ENCODE measurements at regions of chr6 and their contacts with region 1.

Region 1: GRCh38 chr6:797479-798077 is 104.6 kb upstream of the EXOC2 start:
- DNase-seq: peak in 7 of 14 experiments; percentile 1 to 59 (median 40)
- ATAC-seq: no peak
- H3K4me3 ChIP-seq: no peak overlapping the region
- H3K4me3 Mint-ChIP-seq: no peak overlapping the region
- H3K27ac ChIP-seq: no peak overlapping the region
- H3K27ac Mint-ChIP-seq: no peak overlapping the region
- H3K4me1 ChIP-seq: no peaks in the 10 kb centered on the region
- H3K4me1 Mint-ChIP-seq: no peaks in the 10 kb centered on the region
- H3K27me3 ChIP-seq: peaks cover 3 to 14% of the 10 kb centered on the region in 2 experiments
- H3K27me3 Mint-ChIP-seq: peaks cover 73% of the 10 kb centered on the region
- CTCF ChIP-seq: peak; percentile 63

Region 2: GRCh38 chr6:1381481-1382330 is 584.1 kb after region 1 on chr6:
- CTCF ChIA-PET with region 1: no interaction called
- POLR2A ChIA-PET with region 1: no interaction called
- intact Hi-C with region 1: loop called in 1 of 2 experiments (anchors 5 kb)
- DNase-seq: peak in 13 of 14 experiments; percentile 19 to 70 (median 48)
- ATAC-seq: peak; percentile 67
- H3K4me3 ChIP-seq: no peak overlapping the region
- H3K4me3 Mint-ChIP-seq: no peak overlapping the region
- H3K27ac ChIP-seq: no peak overlapping the region
- H3K27ac Mint-ChIP-seq: no peak overlapping the region
- H3K4me1 ChIP-seq: peaks cover 37% of the 10 kb centered on the region
- H3K4me1 Mint-ChIP-seq: peaks cover 43% of the 10 kb centered on the region
- H3K27me3 ChIP-seq: peaks cover 75 to 96% of the 10 kb centered on the region in 2 experiments
- H3K27me3 Mint-ChIP-seq: peaks cover 72% of the 10 kb centered on the region
- CTCF ChIP-seq: peak; percentile 47

Region 3: DNA sequence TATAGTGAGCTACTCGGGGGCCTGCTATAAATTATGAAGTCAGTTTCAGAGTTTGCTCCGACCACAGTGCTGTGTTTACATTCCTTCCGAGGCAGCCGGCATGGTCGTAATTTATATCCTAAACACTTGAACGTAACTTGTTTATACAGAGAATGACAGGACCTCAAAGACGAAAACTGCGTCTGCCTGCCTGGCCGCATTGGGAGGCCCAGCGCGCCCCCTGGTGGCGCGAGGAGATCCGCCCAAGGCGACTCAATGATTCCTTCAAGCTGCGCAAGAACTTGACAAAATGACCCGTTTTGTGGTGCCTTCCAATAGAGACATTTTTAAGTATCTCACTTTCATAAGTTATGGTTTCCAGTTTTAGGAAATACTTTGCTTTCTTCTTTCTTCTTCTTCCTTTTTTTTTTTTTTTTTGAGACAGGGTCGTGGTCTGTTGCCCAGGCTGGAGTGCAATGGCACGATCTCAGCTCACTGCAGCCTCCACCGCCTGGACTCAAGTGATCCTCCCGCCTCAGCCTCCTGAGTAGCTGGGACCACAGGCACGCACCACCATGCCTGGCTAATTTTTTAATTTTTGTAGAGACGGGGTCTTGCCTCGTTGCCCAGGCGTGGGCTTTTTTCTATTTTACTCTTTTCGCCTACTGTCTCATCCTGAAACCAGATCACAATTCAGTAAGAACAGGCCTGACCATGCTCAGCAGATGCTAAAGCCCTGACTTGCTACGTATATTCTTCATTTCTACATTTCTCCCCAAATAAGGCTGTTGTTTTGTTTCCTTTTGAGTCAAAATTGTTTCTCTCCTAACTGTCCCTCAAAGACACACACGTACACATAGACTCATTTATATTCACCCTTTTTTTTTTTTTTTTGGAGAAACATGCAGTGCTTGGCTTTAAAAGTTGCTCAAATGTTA is 599.6 kb after region 1 on chr6:
- CTCF ChIA-PET with region 1: no interaction called
- POLR2A ChIA-PET with region 1: no interaction called
- intact Hi-C with region 1: loop called (anchors 1 to 5 kb)
- DNase-seq: peak; percentile 47 to 81 (median 63)
- ATAC-seq: peak; percentile 63
- H3K4me3 ChIP-seq: no peak overlapping the region
- H3K4me3 Mint-ChIP-seq: no peak overlapping the region
- H3K27ac ChIP-seq: no peak overlapping the region
- H3K27ac Mint-ChIP-seq: no peak overlapping the region
- H3K4me1 ChIP-seq: peaks cover 14% of the 10 kb centered on the region
- H3K4me1 Mint-ChIP-seq: peaks cover 12% of the 10 kb centered on the region
- H3K27me3 ChIP-seq: peaks cover 45 to 84% of the 10 kb centered on the region in 2 experiments
- H3K27me3 Mint-ChIP-seq: peaks cover 72% of the 10 kb centered on the region
- CTCF ChIP-seq: peak; percentile 96

Region 4: DNA sequence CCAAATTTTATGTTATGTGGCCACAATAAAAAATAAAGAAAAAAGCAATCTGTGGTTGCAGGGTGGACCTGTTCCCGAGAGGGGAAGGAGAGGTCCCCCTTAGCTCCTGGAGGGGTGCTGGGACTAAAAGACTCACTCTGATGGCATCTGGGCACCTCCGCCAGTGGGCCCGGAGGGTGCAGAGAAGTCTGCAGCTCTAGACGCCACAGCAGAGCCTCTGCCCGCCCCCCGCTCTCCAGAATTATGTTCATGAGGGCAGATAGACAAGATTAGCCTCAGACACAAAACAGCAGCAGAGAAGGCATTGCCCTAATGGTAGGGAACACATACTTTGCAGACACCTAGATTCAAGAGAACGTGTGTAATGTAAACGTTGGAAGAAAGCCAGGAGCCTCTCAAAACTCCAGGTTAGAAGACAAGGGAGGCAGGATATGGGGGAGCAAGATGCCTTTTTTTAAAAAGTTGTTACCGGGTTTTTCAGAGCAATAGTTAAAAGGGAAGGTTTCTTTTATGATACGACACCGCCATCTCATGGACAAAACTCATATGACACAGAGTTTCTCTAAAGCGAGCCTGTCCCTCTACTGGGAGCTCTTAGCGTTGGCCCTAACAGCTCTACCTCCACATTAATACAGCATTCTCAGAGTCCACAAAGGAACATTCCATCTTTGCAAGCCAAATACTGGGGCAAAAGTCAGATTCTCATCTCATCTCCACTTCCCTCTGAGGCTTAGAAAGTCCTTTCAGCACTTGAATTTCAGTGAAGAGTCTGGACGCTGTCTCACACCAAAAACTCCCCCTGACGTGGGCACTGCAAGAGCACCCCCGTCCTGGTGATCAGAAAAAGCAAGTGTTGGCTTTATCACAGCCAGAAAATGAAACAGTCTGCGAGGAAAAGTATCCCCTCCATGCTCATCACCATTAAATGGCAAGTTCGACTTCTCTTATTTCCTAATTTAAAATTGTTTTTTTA is 639.0 kb after region 1 on chr6:
- CTCF ChIA-PET with region 1: no interaction called
- POLR2A ChIA-PET with region 1: no interaction called
- intact Hi-C with region 1: loop called (anchors 1 to 2 kb)
- DNase-seq: peak in 11 of 14 experiments; percentile 7 to 72 (median 26)
- ATAC-seq: peak; percentile 82
- H3K4me3 ChIP-seq: no peak overlapping the region
- H3K4me3 Mint-ChIP-seq: no peak overlapping the region
- H3K27ac ChIP-seq: no peak overlapping the region
- H3K27ac Mint-ChIP-seq: no peak overlapping the region
- H3K4me1 ChIP-seq: no peaks in the 10 kb centered on the region
- H3K4me1 Mint-ChIP-seq: peaks cover 6% of the 10 kb centered on the region
- H3K27me3 ChIP-seq: peaks cover 9 to 20% of the 10 kb centered on the region in 2 experiments
- H3K27me3 Mint-ChIP-seq: peaks cover 55% of the 10 kb centered on the region
- CTCF ChIP-seq: peak; percentile 79